ENCODE measurements at regions of chr3 and their contacts with region 1.

Region 1: DNA sequence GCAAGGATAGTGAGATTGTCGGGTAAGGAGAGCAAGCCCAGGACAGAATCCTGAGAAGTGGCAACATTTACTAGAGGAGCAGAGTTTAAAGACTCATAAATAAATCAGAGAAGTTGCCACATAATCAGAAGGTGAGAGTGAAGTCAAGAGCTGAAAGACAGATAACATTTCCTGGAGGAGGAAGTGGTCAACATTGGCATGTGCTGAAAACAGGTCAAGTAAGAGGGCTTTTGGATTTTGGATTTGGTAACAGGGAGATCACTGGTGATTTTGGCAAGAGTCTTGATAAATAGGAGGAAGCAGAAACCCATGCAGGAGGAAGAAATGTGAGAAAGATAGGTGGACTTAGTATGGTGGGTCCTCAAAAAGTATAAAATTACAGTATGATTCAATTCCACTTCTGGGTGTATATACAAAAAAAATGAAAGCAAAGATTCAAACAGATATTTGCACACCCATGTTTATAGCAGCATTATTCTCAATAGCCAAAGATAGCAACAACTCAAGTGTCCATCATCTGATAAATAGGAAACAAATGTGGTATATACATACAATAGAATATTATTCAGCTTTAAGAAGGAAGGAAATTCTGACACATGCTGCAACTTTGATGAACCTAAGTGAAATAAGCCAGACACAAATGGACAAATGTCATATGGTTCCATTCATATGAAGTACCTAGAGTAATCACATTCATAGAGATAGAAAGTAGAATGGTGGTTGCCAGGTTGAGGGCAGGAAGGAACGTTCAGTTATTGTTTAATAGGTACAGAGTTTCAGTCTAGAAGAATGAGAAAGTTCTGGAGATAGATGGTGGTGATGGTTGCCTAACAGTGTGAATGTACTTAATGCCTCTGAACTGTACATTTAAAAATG is 27.3 kb upstream of the MBNL1 start:
- DNase-seq: no peak
- ATAC-seq: peak; percentile 50
- H3K4me3 Mint-ChIP-seq: peak overlapping the region; percentile 88
- H3K27ac Mint-ChIP-seq: peak overlapping the region; percentile 95
- H3K4me1 Mint-ChIP-seq: peaks cover 61% of the 10 kb centered on the region
- H3K27me3 Mint-ChIP-seq: no peaks in the 10 kb centered on the region

Region 2: GRCh38 chr3:152183473-152183872 is 57.9 kb before region 1 on chr3:
- CTCF ChIA-PET with region 1: interaction called, 14 read pairs
- POLR2A ChIA-PET with region 1: no interaction called
- intact Hi-C with region 1: no loop called
- DNase-seq: peak; percentile 72
- ATAC-seq: peak; percentile 87
- H3K4me3 Mint-ChIP-seq: peak overlapping the region; percentile 6
- H3K27ac Mint-ChIP-seq: peak overlapping the region; percentile 71
- H3K4me1 Mint-ChIP-seq: peaks cover 67% of the 10 kb centered on the region
- H3K27me3 Mint-ChIP-seq: no peaks in the 10 kb centered on the region

Region 3: DNA sequence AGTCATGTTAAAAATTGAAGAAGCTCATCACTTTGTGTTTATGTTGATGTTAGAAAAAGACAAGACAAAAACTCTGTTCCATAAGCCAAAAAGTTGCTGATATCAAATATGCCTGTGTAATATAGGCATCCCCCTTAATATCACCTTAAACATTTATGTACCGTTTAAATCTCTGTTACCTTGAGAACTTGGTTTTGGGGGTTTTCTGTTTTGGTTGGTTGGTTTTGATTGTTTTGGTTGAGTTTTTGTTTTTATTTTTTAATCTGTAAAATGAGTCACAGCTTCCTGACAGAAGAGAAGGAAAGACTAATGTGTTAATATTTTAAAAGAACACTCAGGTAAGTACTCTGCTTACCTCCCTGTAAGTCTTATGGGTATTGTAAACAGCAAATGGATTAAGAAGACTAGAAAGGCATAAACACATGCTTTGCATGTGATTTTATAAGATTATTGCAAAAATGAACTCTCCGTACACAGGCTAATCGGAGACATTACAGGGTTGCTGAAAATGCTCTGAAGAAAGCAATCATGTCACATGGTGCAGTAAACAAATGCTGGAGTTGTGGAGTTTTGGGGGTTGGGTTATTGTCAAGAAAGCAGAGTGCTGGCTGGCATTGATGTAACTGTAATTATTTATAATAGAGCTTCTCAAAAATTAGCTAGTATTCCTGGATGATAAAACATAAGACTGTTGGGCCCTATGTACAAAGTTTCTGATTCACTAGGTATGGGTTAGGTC is 42.1 kb before region 1 on chr3:
- CTCF ChIA-PET with region 1: interaction called, 17 read pairs
- POLR2A ChIA-PET with region 1: interaction called, 3 read pairs
- intact Hi-C with region 1: loop called (anchors 2 kb)
- DNase-seq: no peak
- ATAC-seq: peak; percentile 24
- H3K4me3 Mint-ChIP-seq: peak overlapping the region; percentile 72
- H3K27ac Mint-ChIP-seq: peak overlapping the region; percentile 96
- H3K4me1 Mint-ChIP-seq: peaks cover 67% of the 10 kb centered on the region
- H3K27me3 Mint-ChIP-seq: no peaks in the 10 kb centered on the region

Region 4: DNA sequence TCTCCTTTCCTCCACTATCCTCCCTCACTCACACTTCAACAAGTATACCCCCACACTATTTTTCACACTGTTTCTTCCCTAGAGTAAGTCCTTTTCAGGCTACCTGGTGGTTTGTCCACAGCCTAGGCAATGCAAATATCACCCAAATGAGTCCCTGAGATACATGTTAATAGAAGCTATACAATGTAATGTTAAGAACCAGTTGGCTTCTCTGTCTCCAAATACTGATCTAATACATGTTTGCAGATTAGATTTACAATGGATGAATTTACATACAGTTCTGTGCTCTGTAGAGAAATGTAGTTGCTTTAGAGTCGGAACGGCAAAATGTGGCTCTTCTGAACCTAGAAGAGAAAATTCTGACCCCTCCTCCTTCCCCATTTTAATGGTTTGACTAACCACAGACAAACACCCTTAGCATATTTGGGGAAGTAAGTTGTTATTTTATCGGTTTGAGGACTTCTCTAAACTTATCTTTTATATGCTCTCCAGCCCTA is 36.2 kb before region 1 on chr3:
- CTCF ChIA-PET with region 1: interaction called, 17 read pairs
- POLR2A ChIA-PET with region 1: interaction called, 3 read pairs
- intact Hi-C with region 1: loop called (anchors 1 to 2 kb)
- DNase-seq: no peak
- ATAC-seq: no peak
- H3K4me3 Mint-ChIP-seq: peak overlapping the region; percentile 70
- H3K27ac Mint-ChIP-seq: peak overlapping the region; percentile 92
- H3K4me1 Mint-ChIP-seq: peaks cover 65% of the 10 kb centered on the region
- H3K27me3 Mint-ChIP-seq: no peaks in the 10 kb centered on the region

Region 5: DNA sequence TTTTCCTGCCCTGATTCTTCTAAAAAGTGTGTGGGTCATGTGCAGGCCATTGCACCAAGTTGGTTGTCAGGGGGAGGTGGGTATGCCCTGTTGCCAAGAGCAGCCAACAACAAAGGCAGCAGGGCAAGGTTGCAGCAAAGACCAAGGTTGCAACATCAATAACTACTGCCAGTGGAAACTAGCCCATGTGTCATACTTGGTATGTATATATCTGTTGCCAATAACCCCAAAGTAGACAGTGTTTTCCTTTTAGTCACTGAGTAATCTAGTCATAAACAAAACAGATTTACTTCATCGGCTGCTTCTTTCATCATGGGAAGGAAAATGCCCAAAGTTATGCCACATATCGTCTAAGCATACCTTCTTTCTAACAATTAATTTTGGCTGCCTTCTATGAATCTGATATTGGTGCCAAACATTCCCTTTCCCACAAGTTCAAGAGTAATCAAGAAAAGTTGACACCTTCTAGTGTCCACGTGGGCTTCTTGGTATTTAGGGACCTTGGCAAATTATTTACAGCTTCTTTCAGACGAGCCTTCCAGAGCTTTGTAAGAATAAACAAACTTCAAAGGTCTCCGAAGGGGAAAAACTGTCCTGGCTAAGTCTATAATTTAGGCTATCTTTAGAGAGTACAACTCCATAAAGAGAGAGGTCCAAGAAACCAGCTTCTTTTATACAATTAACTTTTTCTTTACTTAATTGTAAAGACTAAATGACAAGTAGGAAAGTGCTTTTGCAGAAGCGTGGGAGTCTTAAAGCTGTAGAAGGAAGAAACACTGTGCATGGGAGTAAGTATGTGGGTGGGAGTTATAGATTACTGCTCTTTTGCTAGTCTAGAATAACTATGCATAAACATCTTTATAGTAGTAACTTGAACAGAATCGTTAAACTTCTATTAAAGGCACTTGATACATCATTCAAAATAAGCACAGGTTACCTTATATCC is 17.3 kb after region 1 on chr3:
- CTCF ChIA-PET with region 1: interaction called, 69 read pairs
- POLR2A ChIA-PET with region 1: interaction called, 4 read pairs
- intact Hi-C with region 1: loop called (anchors 1 to 2 kb)
- DNase-seq: peak; percentile 82
- ATAC-seq: peak; percentile 81
- H3K4me3 Mint-ChIP-seq: peak overlapping the region; percentile 61
- H3K27ac Mint-ChIP-seq: peak overlapping the region; percentile 91
- H3K4me1 Mint-ChIP-seq: peaks cover 90% of the 10 kb centered on the region
- H3K27me3 Mint-ChIP-seq: no peaks in the 10 kb centered on the region

Region 6: GRCh38 chr3:152298393-152299242 is 57.2 kb after region 1 on chr3:
- CTCF ChIA-PET with region 1: no interaction called
- POLR2A ChIA-PET with region 1: interaction called, 9 read pairs
- intact Hi-C with region 1: loop called in 1 of 2 experiments (anchors 2 kb)
- DNase-seq: peak; percentile 70
- ATAC-seq: peak; percentile 87
- H3K4me3 Mint-ChIP-seq: peak overlapping the region; percentile 69
- H3K27ac Mint-ChIP-seq: peak overlapping the region; percentile 79
- H3K4me1 Mint-ChIP-seq: peaks cover 75% of the 10 kb centered on the region
- H3K27me3 Mint-ChIP-seq: no peaks in the 10 kb centered on the region